Sigmoid colon (tissue), 7 donors: ENCODE measurements at regions of chr16 and their contacts with region 1.

Region 1: GRCh38 chr16:81696961-81697615 is 82.0 kb upstream of the PLCG2 start:
- DNase-seq: no peak
- H3K4me3 ChIP-seq: no peak overlapping the region
- H3K27ac ChIP-seq: peak overlapping the region; percentile 18 to 95 (median 55)
- H3K4me1 ChIP-seq: peaks cover 0 to 61% (median 45%) of the 10 kb centered on the region in 4 donors
- H3K27me3 ChIP-seq: no peaks in the 10 kb centered on the region
- CTCF ChIP-seq: peak; percentile 32 to 59 (median 56)
- EP300 ChIP-seq: no peak
- POLR2A ChIP-seq: no peak

Region 2: DNA sequence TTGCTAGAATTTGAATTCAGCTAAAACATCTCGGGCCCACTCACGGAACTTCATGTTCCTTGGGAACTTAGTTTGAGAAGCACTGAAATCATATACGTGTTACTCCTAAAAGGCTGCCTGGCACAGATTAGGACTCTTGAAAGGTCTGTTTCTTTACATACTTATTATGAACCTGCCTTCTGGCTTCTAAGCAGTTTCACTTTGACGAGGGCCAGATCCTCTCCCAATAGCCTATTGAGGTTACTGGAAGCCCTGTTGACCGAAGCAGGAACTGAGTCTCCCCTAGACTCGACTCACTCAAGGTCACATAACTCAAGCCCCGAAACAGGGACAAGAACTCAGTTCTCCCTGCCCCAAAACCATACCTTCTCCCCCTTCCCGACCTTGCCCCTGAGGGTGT is 39.9 kb before region 1 on chr16:
- intact Hi-C with region 1: loop called (anchors 2 kb)
- DNase-seq: no peak
- H3K4me3 ChIP-seq: peak overlapping the region in 2 of 4 donors; percentile 7 to 18
- H3K27ac ChIP-seq: peak overlapping the region in 3 of 4 donors; percentile 77 to 90 (median 87)
- H3K4me1 ChIP-seq: peaks cover 0 to 62% (median 59%) of the 10 kb centered on the region in 4 donors
- H3K27me3 ChIP-seq: no peaks in the 10 kb centered on the region
- CTCF ChIP-seq: no peak
- EP300 ChIP-seq: peak in 3 of 4 donors; percentile 61 to 89 (median 73)
- POLR2A ChIP-seq: no peak